Activated T-helper 2 cell treated with anti-CD3 and anti-CD28 coated beads, Interferon-gamma antibody, Interleukin-2, Interleukin-4, amounts not matched to agents 10 μg/mL and 5 μg/mL and 100 μg/mL, durations not matched to agents 14 hours and 24 hours and 36 hours (primary cell): ENCODE measurements at regions of chr3 and their contacts with region 1.

Region 1: GRCh38 chr3:186930641-186931531 is 560 bp downstream of the ST6GAL1 start:
- DNase-seq: peak; percentile 60
- H3K4me3 Mint-ChIP-seq: peak overlapping the region; percentile 92
- H3K27ac Mint-ChIP-seq: peak overlapping the region; percentile 86
- H3K4me1 Mint-ChIP-seq: peaks cover 43% of the 10 kb centered on the region
- H3K27me3 Mint-ChIP-seq: no peaks in the 10 kb centered on the region

Region 2: DNA sequence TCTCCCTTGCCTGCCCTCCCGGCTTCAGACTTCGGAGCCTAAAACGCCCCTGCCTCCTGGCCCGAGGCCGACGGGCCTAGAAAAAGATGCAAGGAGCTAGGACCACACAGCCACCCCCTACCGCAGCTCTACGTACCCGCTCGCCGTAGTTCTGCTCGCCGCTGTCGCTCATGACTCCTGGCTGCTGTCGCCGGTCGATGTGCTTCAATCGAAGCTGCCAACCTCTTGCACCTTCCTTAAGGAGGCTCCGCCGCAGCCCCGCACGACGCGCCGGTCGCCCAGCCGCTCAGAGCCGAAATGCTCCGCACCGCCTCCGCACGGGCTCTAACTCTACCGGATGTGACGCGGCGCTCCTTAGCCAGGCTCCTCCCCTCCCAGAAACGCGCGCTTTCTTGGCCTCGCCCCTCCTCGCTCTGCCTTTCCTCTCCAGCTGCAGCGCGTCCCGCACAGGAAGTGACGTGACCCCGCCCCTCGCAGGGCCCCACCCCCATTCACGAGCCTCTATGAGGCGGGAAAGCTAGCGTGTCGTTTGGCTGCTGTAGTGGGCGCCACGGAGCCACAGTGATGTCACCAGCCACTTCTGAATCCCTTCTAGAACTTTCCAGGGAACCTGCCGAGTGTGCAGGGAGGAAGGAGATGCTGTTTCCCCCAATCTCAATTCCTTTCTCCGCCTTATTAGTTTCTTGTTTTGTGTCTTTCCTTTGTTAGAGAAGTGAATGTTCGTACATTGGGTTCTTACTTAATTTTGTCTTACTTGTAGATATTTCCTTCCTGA is 993.0 kb before region 1 on chr3 and contains the start of gene TRA2B:
- intact Hi-C with region 1: loop called (anchors 5 kb)
- DNase-seq: peak; percentile 98
- H3K4me3 Mint-ChIP-seq: peak within 1 kb of the TSS; percentile 98
- H3K27ac Mint-ChIP-seq: peak within 1 kb of the TSS; percentile 100
- H3K4me1 Mint-ChIP-seq: peaks cover 34% of the 10 kb centered on the region
- H3K27me3 Mint-ChIP-seq: peaks cover 13% of the 10 kb centered on the region
- total RNA-seq, gene TRA2B: 277 and 282 TPM in 2 replicates

Region 3: DNA sequence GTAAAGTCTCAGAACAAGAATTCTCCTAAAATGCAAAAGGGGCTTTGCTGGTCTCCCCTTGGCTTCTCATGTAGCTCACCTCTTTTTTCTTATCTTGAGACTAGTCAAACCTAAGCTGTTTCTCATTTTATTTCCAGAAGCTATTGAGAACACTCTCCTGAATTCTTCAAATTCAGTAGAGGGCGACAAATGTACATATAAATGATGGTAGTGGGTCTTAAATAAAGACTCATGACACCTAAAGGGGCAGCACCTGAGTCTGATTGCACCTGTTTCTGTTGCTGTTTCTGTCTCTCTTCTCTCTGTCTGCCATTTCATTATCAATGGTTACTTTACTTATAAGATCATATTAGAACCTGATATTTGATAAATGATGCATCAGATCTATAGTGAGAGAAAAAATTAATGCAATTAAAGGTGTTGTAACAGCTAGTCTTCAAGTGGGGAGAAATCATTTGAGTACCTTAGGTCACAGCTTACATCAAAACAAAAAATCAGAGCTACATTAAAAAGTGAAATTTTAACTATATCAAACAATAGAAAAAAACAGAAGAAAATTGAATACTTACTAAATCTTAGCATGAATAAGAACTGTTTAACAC is 81.4 kb before region 1 on chr3:
- intact Hi-C with region 1: loop called (anchors 2 kb)
- DNase-seq: no peak
- H3K4me3 Mint-ChIP-seq: no peak overlapping the region
- H3K27ac Mint-ChIP-seq: peak overlapping the region; percentile 3
- H3K4me1 Mint-ChIP-seq: peaks cover 13% of the 10 kb centered on the region
- H3K27me3 Mint-ChIP-seq: peaks cover 15% of the 10 kb centered on the region

Region 4: GRCh38 chr3:186953011-186953487 is 22.2 kb after region 1 on chr3:
- intact Hi-C with region 1: loop called (anchors 1 kb)
- DNase-seq: no peak
- H3K4me3 Mint-ChIP-seq: peak overlapping the region; percentile 27
- H3K27ac Mint-ChIP-seq: peak overlapping the region; percentile 74
- H3K4me1 Mint-ChIP-seq: peaks cover 66% of the 10 kb centered on the region
- H3K27me3 Mint-ChIP-seq: no peaks in the 10 kb centered on the region

Region 5: DNA sequence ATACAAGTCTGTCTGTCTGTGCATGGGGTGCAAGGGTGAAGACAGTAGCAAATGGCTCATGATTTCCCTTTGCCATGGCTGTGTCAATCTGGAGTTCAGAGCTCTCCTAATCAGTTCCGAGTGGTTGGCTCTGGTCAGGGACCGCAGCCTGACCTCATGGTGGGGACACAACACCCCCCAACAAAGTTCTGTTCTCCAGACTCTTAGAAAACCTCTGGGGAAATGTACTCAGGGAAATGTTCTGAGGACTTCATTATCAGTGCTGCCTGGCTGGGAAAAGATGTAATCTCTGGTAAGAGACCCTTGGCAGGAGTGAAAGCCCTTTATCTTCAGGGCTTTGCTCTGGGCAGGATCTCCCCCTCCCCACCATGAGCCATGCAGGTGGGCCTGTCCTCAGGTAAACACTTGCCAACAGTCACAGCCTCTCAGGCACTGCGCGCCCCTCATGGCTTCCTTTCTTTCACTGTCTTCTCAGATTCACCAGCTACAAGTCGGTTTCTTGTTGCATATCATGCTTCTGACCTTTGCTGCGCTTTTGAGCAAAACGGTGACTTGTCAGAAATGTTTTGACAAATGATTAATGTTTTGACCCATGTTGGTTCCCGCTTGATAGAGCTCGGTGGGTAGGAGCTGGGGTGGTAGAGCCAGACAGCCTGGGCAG is 94.9 kb after region 1 on chr3:
- intact Hi-C with region 1: loop called (anchors 2 kb)
- DNase-seq: no peak
- H3K4me3 Mint-ChIP-seq: peak overlapping the region; percentile 77
- H3K27ac Mint-ChIP-seq: peak overlapping the region; percentile 89
- H3K4me1 Mint-ChIP-seq: peaks cover 51% of the 10 kb centered on the region
- H3K27me3 Mint-ChIP-seq: no peaks in the 10 kb centered on the region